HepG2 (cell line): ENCODE measurements at regions of chr7 and their contacts with region 1.

Region 1: DNA sequence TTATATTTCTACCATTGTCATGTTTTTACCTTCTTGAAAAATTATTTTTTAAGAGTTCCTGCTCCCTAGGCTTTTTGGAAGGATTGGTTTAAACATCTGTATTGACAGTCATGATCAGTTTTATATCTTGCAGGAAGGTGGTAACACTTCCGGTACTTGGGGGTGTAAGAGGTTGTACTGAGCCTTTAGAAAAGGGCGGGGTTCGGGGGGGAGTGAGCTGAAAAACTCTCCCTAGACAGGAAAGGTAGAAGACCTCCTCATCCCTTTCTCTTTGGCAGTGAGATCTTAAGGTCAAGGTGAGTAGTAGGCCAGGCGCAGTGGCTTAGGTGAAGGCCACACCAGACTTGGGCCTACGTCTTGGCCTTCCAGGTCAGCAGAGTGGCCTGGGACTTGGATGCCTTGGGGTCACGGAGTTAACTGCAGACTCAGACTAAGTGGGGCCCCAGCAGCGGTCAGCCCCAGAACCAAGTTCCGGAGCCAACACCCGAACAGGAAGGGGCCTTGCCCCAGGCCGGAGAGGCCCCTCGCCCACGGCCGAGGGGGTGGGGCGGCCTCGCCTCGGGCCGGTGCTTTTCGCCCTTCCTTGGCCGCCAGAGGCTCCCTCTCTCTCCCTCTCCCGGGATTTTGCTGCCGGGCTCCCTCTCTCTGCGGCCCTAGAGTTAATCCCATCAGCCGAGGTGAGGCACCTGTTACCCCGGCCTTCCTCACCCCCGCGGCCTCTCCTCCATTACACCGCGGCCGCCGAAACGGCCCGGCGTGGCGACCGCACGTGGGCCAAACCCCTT is at the start of gene PPP1R9A:
- DNase-seq: peak; percentile 63
- ATAC-seq: peak; percentile 87
- H3K4me3 ChIP-seq: peak within 1 kb of the TSS; percentile 66 to 88 (median 81)
- H3K27ac ChIP-seq: peak within 1 kb of the TSS; percentile 81
- H3K4me1 ChIP-seq: peaks cover 48% of the 10 kb centered on the region
- H3K27me3 ChIP-seq: no peaks in the 10 kb centered on the region; a peak in 1 of 5 replicates
- CTCF ChIP-seq: peak; percentile 70
- EP300 ChIP-seq: peak in 1 of 2 experiments; percentile 45; a peak in 1 of 4 replicates
- POLR2A ChIP-seq: 0 out of 4 replicates have a peak, but pooled peaks of 1 of the 2 experiments have one; percentile 45
- RAD21 ChIP-seq: peak; percentile 75
- total RNA-seq, gene PPP1R9A: 18.2 and 31.9 TPM in 2 replicates

Region 2: DNA sequence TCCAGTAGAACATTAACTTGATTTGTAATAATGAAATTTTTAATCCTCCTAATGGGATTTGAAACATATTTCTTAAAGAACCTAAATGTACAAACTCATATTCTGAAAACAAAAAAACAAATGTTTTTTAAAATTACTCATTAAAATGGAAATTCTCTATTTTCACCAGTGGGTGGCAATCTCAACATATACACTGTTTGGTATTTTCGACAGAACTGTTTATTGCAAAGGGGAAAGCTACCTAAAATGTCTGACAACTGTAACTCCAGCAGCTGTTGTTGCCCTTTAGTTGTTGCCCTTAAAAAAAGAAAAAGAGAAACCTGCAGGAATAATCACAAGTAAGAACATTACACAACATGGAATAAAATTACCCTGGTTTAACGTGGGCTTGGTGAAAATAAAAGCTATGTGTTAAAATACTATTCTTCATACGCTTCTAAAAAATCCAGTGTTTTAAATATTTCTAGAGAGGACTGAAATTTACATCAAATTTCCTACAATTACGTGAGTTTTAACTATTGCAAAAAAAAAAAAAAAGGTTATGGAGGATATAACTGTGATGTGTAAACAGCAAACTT is 458.0 kb before region 1 on chr7:
- CTCF ChIA-PET with region 1: no interaction called
- POLR2A ChIA-PET with region 1: no interaction called
- in situ Hi-C with region 1: no loop called
- intact Hi-C with region 1: loop called (anchors 5 kb)
- DNase-seq: peak; percentile 45
- ATAC-seq: no peak
- H3K4me3 ChIP-seq: no peak overlapping the region
- H3K27ac ChIP-seq: no peak overlapping the region
- H3K4me1 ChIP-seq: peaks cover 57% of the 10 kb centered on the region
- H3K27me3 ChIP-seq: no peaks in the 10 kb centered on the region
- CTCF ChIP-seq: peak; percentile 63
- EP300 ChIP-seq: no peak
- POLR2A ChIP-seq: no peak
- RAD21 ChIP-seq: peak; percentile 68

Region 3: GRCh38 chr7:94701555-94701973 is 205.7 kb before region 1 on chr7:
- CTCF ChIA-PET with region 1: no interaction called
- POLR2A ChIA-PET with region 1: no interaction called
- in situ Hi-C with region 1: no loop called
- intact Hi-C with region 1: loop called (anchors 5 kb)
- DNase-seq: peak; percentile 99
- ATAC-seq: peak; percentile 99
- H3K4me3 ChIP-seq: peak overlapping the region in 2 of 3 experiments; percentile 13 to 31; a peak in 2 of 6 replicates
- H3K27ac ChIP-seq: peak overlapping the region; percentile 100
- H3K4me1 ChIP-seq: peaks cover 67% of the 10 kb centered on the region
- H3K27me3 ChIP-seq: no peaks in the 10 kb centered on the region
- CTCF ChIP-seq: no peak
- EP300 ChIP-seq: peak; percentile 94 to 96
- POLR2A ChIP-seq: no peak
- RAD21 ChIP-seq: no peak

Region 4: GRCh38 chr7:95028683-95029082 is 121.5 kb after region 1 on chr7:
- CTCF ChIA-PET with region 1: no interaction called
- POLR2A ChIA-PET with region 1: no interaction called
- in situ Hi-C with region 1: no loop called
- intact Hi-C with region 1: loop called (anchors 5 kb)
- DNase-seq: peak; percentile 92
- ATAC-seq: peak; percentile 98
- H3K4me3 ChIP-seq: peak overlapping the region in 1 of 3 experiments; percentile 32; a peak in 1 of 6 replicates
- H3K27ac ChIP-seq: peak overlapping the region; percentile 68
- H3K4me1 ChIP-seq: peaks cover 57% of the 10 kb centered on the region
- H3K27me3 ChIP-seq: no peaks in the 10 kb centered on the region
- CTCF ChIP-seq: no peak
- EP300 ChIP-seq: peak in 1 of 2 experiments; percentile 95; a peak in 2 of 4 replicates
- POLR2A ChIP-seq: no peak
- RAD21 ChIP-seq: no peak

Region 5: GRCh38 chr7:95199779-95200558 is 292.8 kb after region 1 on chr7:
- CTCF ChIA-PET with region 1: no interaction called
- POLR2A ChIA-PET with region 1: no interaction called
- in situ Hi-C with region 1: no loop called
- intact Hi-C with region 1: loop called (anchors 2 kb)
- DNase-seq: peak; percentile 49
- ATAC-seq: peak; percentile 87
- H3K4me3 ChIP-seq: no peak overlapping the region
- H3K27ac ChIP-seq: no peak overlapping the region
- H3K4me1 ChIP-seq: no peaks in the 10 kb centered on the region
- H3K27me3 ChIP-seq: no peaks in the 10 kb centered on the region
- CTCF ChIP-seq: peak; percentile 78
- EP300 ChIP-seq: no peak
- POLR2A ChIP-seq: no peak
- RAD21 ChIP-seq: peak; percentile 49; the same call in 1 of the 2 replicates